Activated T-helper 1 cell treated with anti-CD3 and anti-CD28 coated beads, Interleukin-12 subunit alpha, Interleukin-12 subunit beta, Interleukin-2, Interleukin-4 antibody, amounts not matched to agents 30 ng/mL and 10 ng/mL and 1 ng/mL, durations not matched to agents 14 hours and 24 hours and 36 hours (primary cell): ENCODE measurements at regions of chr3 and their contacts with region 1.

Region 1: GRCh38 chr3:171566803-171567422 is 106.7 kb upstream of the TNIK start:
- DNase-seq: no peak
- H3K4me3 Mint-ChIP-seq: no peak overlapping the region
- H3K27ac Mint-ChIP-seq: no peak overlapping the region
- H3K4me1 Mint-ChIP-seq: peaks cover 30% of the 10 kb centered on the region
- H3K27me3 Mint-ChIP-seq: peaks cover 12% of the 10 kb centered on the region

Region 2: GRCh38 chr3:170869645-170870593 is 697.0 kb before region 1 on chr3 and contains the start of gene RPL22L1:
- intact Hi-C with region 1: loop called (anchors 10 kb)
- DNase-seq: peak; percentile 90
- H3K4me3 Mint-ChIP-seq: peak within 1 kb of the TSS; percentile 98
- H3K27ac Mint-ChIP-seq: peak within 1 kb of the TSS; percentile 100
- H3K4me1 Mint-ChIP-seq: peaks cover 24% of the 10 kb centered on the region
- H3K27me3 Mint-ChIP-seq: peaks cover 4% of the 10 kb centered on the region
- total RNA-seq, gene RPL22L1: 123 and 145 TPM in 2 replicates

Region 3: DNA sequence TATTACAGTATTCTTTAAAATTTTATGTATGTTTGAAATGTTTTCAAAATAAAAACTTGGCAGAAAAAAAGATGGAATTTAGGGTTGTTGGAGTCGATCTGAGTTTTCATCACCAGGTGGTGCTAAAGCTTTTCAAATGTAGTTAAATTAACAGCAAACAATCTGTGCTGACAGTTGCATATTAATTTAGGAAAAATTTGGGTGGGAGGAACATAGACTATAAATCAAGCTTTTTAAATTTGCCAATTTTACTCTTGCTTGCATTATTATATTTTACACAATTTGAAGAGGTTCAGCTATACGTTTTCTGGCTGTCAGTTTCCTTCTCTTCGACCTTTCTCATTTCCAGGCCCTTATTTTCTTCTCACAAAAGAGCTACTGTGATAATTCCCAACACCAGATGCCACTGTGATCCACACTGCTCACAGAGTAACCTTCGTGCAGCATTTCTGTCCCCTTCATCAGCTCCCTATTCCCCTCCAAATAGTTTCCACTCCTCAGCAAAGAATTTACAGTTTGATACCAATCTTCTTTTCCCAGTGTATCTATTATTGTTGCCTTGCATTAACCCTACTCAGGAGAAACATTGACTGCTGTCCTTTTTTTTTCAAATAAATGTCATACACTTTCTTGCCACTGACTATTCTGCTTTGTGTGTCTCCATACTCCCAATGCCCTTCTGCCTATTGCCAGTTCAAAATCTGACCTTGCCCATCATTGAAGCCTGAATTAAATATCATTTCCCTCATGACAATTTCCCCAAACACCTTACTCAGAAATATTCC is 605.1 kb before region 1 on chr3:
- intact Hi-C with region 1: loop called (anchors 1 kb)
- DNase-seq: no peak
- H3K4me3 Mint-ChIP-seq: no peak overlapping the region
- H3K27ac Mint-ChIP-seq: no peak overlapping the region
- H3K4me1 Mint-ChIP-seq: no peaks in the 10 kb centered on the region
- H3K27me3 Mint-ChIP-seq: peaks cover 13% of the 10 kb centered on the region

Region 4: DNA sequence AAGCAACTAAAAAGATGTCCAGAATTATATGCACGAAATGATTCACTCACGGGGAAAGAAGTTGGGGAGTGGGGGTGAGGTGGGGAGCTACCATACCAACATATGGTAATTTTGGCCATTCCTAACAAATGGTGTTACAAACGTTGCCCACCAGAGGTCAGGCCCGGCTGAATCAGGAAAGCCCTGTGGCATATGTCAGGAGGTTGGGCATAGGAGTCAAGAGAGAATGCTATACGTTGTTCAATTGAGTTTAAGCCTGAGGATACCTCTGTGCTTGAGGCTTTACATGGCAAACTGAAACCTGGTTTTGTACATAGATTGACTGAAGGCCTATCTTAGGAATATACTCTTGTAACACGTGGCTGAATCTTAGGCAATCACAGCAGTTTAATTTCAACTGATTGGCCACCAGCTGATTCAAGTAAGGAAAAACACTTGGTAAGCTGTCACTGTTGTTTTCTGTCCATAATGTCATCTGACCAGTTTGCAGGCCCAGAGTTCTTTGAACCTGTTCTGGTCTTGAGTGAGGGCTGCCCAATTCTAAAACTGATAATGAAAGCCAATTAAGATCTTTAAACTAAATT is 517.0 kb before region 1 on chr3:
- intact Hi-C with region 1: loop called (anchors 1 kb)
- DNase-seq: peak; percentile 9
- H3K4me3 Mint-ChIP-seq: no peak overlapping the region
- H3K27ac Mint-ChIP-seq: no peak overlapping the region
- H3K4me1 Mint-ChIP-seq: no peaks in the 10 kb centered on the region
- H3K27me3 Mint-ChIP-seq: peaks cover 10% of the 10 kb centered on the region

Region 5: DNA sequence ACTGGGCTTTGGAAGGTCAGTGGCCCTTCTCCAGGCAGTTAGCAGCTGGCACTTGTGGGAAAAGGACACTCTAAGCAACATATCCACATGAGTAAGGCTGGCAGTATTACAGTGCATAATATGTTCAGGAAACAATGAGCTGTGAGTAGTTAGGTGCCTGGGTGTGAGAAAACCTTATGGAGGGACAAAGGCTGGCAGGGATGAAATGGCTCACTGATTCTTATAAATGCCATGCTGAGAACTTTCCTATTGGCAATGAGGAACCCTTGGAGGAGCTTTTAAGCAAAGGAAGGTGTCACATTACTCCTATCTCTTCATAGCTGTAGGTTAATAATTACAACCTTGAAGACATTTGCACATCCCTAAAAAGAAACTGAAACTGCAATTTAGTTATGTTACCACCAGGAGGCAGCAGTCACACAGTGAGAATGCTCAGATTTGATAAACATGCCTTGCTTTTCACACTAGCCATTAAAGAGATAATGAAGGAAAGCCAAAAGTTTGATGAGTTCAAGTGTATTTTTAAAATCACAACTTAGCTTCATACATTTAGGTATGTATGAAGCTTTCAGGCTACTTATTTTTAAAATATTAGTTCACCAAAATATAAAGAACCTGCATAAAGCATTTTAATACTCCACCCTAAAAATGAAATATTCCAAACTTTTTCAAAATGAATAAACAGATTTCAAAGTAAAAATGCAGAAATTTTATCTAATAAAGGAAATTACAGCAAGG is 403.8 kb before region 1 on chr3:
- intact Hi-C with region 1: loop called (anchors 1 kb)
- DNase-seq: no peak
- H3K4me3 Mint-ChIP-seq: no peak overlapping the region
- H3K27ac Mint-ChIP-seq: no peak overlapping the region
- H3K4me1 Mint-ChIP-seq: peaks cover 20% of the 10 kb centered on the region
- H3K27me3 Mint-ChIP-seq: no peaks in the 10 kb centered on the region

Region 6: DNA sequence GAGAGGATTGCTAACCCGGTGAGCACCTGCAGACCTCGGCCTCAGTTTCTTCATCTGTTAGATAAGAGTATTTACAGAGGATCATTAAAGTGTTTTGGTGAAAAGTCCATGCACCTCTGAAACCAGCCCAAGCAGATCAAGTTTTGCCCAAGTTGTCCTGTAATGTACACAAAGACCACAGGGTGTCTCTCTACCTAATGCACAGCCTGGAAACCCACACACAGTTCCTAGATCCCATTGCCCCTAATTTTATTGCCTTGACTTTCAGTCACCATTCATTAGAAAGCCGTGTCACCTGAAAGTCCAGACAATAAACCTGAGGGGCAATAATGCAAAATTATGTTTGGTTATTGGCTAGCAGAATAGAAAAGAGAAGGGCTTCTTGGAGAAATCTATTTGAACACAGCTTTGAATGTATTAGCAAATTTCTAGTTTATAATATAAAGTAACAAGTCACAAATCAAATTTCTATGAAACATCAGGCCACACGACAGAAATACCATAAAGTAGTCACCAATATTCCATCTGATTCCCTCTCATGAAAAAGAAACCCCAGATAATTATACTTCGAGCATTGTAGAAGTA is 379.1 kb before region 1 on chr3:
- intact Hi-C with region 1: loop called (anchors 1 kb)
- DNase-seq: no peak
- H3K4me3 Mint-ChIP-seq: no peak overlapping the region
- H3K27ac Mint-ChIP-seq: no peak overlapping the region
- H3K4me1 Mint-ChIP-seq: peaks cover 56% of the 10 kb centered on the region
- H3K27me3 Mint-ChIP-seq: no peaks in the 10 kb centered on the region

Region 7: DNA sequence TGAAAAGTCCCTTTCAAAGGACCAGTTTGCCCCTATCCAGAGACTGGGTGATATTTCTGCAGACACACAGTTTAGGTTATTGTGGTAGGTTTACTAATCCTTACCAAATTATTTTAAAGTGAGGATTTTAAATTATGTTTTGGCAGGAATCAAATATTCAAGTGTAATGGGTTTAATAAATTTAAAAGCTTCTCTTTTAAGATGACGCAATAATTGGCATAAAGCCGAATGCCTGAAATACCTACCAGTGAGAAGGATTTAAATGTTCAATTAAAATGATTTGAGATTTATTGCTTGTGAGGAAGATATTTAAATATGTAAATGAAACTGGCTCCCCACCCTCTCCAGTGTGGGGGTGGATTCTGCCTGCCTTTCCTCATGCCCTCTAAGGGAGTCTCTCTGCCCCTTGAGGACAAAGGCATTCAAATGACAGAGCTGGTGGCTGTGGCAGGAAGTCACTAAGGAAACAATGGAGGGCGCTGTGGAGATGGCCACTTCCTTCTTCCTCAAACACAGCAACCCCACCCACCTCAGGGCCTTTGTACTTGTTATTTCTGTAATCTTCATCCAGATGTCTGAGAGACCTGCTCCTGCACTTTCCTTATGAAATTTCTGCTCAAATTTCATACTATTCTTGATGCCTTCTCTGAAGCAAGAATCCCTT is 238.4 kb before region 1 on chr3:
- intact Hi-C with region 1: loop called (anchors 5 kb)
- DNase-seq: peak; percentile 21
- H3K4me3 Mint-ChIP-seq: no peak overlapping the region
- H3K27ac Mint-ChIP-seq: no peak overlapping the region
- H3K4me1 Mint-ChIP-seq: peaks cover 15% of the 10 kb centered on the region
- H3K27me3 Mint-ChIP-seq: no peaks in the 10 kb centered on the region